ENCODE measurements at regions of chr1 and their contacts with region 1.

Region 1: DNA sequence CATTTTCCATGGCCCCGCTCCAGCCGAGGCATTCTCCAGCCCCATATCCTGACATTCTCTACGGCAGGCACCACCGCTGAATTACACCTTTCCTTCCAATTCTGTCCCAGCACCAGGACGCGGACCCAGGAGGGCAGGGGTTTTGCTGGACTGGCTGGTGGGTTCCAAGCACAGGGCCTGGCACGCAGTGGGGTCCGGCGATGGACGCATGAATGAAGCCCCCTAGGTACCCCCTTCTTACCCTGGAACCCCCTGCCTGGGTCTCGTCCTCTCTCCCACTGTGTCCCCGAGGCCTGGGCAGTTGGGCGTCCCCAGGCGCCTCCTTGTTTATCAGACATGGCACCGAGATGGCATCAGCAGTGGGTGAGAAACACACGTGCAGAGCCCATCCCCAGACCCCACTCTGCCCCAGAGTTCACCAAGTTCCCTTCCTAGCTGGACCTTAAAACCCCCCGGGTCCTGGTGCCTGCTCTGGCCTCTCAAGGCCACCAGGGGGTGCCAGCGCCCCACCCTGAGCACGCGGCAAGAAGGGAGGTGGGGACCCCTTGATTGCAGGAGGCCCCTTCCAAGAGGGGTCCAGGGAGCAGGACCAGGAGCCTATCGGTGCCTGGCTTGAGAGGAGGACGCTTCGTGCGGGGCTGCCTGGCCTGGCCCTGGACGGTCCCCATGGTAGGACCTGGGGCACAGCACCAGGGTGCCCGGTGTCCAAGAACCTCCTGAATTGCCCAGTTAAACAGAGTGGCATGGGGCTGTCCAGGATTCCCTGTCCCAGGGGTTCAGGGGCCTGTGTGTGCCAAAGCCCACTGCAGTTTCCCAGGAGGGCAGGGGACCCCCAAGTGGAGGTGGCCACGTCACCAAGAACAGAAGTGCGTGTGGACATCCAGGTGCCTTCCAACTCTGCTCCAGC is 46.1 kb downstream of the MEGF6 start:
- DNase-seq: peak; percentile 71
- ATAC-seq: peak; percentile 87
- H3K4me3 Mint-ChIP-seq: no peak overlapping the region
- H3K27ac Mint-ChIP-seq: no peak overlapping the region
- H3K4me1 Mint-ChIP-seq: no peaks in the 10 kb centered on the region
- H3K27me3 Mint-ChIP-seq: no peaks in the 10 kb centered on the region
- CTCF ChIP-seq: peak; percentile 89

Region 2: GRCh38 chr1:3530926-3531818 is 34.0 kb before region 1 on chr1:
- CTCF ChIA-PET with region 1: interaction called, 19 read pairs
- POLR2A ChIA-PET with region 1: no interaction called
- DNase-seq: peak; percentile 88
- ATAC-seq: peak; percentile 89
- H3K4me3 Mint-ChIP-seq: peak overlapping the region; percentile 88
- H3K27ac Mint-ChIP-seq: peak overlapping the region; percentile 99
- H3K4me1 Mint-ChIP-seq: peaks cover 10% of the 10 kb centered on the region
- H3K27me3 Mint-ChIP-seq: peaks cover 24% of the 10 kb centered on the region
- CTCF ChIP-seq: no peak

Region 3: DNA sequence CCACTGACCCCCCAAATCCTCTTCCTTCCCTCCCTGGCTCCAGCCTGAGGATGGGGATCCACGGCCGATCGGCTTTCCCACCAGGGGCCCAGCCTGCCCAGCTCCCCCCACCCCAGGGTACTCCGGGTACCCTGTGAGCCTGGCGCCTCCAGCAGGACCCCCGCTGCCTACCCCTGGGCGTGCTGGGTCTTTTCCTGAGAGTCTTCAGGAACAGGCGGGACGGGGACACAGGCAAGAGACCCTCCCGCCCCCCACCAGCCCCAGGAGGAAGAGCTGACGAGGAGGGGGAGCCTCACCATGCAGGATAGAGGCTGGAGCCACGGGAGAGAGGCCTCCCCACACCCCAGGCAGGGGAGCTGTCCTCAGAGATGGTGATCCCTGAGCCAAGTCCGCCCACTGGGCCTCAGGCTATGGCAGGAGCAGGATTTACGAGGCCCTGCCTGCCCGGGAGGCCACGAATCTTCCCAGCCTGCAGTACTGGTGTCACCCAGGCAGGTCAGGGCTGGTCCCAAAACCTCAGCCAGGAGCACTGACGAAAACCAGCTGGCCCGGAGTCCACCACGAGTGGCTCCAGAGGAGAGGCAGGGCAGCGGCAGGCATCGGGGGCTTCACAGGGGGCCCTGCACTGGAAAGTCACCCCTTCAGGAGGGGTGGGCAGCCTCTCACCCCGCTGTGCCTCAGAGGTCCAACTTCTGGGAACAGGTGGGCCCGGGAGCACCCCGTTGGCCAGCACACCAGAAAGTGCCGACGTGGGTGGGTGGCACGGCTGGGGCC is 11.8 kb before region 1 on chr1:
- CTCF ChIA-PET with region 1: interaction called, 15 read pairs
- POLR2A ChIA-PET with region 1: no interaction called
- DNase-seq: no peak
- ATAC-seq: no peak
- H3K4me3 Mint-ChIP-seq: no peak overlapping the region
- H3K27ac Mint-ChIP-seq: no peak overlapping the region
- H3K4me1 Mint-ChIP-seq: no peaks in the 10 kb centered on the region
- H3K27me3 Mint-ChIP-seq: no peaks in the 10 kb centered on the region; the same call in 1 of the 2 replicates
- CTCF ChIP-seq: no peak

Region 4: DNA sequence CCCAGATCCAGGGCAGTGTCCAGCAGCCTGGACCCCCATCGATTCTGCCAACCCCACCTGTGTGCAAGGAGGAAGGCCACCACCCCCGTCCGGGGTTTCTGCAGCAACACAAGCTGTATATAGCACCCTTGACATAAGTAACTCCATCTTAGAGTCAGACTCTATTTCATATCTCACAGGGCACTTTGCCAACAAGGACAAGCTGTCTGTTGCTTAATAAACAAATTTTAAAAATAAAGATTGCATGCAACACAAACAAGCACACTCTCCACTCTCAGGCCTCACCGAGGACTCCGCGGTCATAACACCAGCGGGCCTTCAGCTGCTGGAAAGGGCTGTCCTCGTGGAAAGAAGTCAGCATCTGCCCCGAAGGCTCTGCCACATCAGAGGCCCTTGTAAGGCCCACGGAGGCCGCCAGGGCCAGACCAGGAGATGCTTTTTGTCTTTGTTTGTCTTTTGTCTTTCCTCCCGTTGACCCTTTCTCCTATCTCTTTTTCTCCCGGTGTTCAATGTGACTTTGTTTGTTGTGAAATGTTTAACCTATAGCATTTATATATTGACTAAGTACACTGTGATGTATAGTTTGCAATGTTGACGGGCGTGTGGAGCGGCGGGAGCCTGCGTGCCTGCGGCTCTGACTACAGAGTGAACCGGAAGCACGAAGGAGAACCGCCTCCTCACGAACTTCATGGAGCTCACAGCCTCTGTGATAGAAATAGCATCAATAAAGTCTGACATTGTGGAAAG is 21.9 kb after region 1 on chr1:
- CTCF ChIA-PET with region 1: interaction called, 20 read pairs
- POLR2A ChIA-PET with region 1: no interaction called
- DNase-seq: no peak
- ATAC-seq: no peak
- H3K4me3 Mint-ChIP-seq: no peak overlapping the region
- H3K27ac Mint-ChIP-seq: peak overlapping the region; percentile 65
- H3K4me1 Mint-ChIP-seq: 0 out of 2 replicates have a peak, but pooled peaks cover 2% of the 10 kb centered on the region
- H3K27me3 Mint-ChIP-seq: no peaks in the 10 kb centered on the region
- CTCF ChIP-seq: no peak

Region 5: DNA sequence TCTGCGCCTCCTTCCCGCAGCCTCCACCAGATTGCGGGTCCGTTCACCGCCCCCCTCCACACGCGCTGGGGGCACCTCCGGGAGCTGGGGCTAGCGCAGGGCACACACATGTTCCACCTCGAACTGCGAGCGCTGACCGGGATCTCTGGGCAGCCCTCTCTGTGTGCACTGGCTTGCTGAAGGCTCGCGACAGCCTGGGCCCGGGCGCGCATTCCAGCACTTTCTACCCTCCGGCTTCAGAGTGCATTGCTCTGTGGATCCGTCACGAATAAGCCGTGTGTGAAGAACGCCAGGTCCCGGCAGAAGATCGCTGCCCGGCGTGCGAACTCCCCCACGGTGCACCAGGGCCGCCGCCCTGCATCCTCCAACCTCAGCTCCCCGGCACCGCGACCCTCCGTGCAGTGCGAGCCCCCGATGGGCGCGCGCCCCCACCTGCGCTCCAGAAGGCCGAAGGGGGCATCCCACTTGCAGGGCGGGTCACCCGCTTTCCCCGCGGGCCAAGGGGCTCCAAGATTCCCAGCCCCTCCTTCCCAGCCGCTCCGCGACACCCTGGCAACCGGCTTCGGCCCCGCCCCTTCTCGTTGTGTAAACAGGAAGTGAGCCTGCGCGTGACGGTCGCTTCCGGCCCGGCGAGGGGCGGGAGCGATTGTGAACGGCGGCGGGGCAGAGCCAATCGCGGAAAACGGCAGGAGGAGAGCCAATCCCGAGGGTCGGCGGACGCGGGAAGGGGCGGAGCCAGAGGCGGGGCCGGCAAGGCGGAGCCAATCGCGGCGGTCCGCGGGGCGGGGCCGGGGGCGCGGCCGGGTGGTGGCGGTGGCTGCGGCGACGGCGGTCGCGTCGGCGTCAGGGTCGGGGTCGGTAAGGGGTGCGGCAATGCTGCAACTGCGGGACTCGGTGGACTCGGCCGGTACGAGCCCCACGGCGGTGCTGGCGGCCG is 59.3 kb after region 1 on chr1 and contains the start of gene TPRG1L:
- CTCF ChIA-PET with region 1: interaction called, 86 read pairs
- POLR2A ChIA-PET with region 1: no interaction called
- DNase-seq: peak; percentile 99
- ATAC-seq: peak; percentile 95
- H3K4me3 Mint-ChIP-seq: peak within 1 kb of the TSS; percentile 90
- H3K27ac Mint-ChIP-seq: peak within 1 kb of the TSS; percentile 41
- H3K4me1 Mint-ChIP-seq: peaks cover 12% of the 10 kb centered on the region
- H3K27me3 Mint-ChIP-seq: peaks cover 3% of the 10 kb centered on the region; the same call in 1 of the 2 replicates
- CTCF ChIP-seq: no peak
- total RNA-seq, gene TPRG1L: 20.9 to 22.3 TPM (median 20.9 TPM) in 3 replicates

Region 6: GRCh38 chr1:3683992-3684391 is 118.8 kb after region 1 on chr1:
- CTCF ChIA-PET with region 1: no interaction called
- POLR2A ChIA-PET with region 1: no interaction called
- DNase-seq: peak; percentile 88
- ATAC-seq: peak; percentile 74
- H3K4me3 Mint-ChIP-seq: no peak overlapping the region; the same call in 1 of the 2 replicates
- H3K27ac Mint-ChIP-seq: no peak overlapping the region
- H3K4me1 Mint-ChIP-seq: peaks cover 15% of the 10 kb centered on the region
- H3K27me3 Mint-ChIP-seq: peaks cover 7% of the 10 kb centered on the region
- CTCF ChIP-seq: no peak

Measured in WTC11 (cell line).